ENCODE measurements at regions of chr9 and their contacts with region 1.

Region 1: GRCh38 chr9:108761655-108762347 is 94.0 kb downstream of the ACTL7B start:
- DNase-seq: peak; percentile 29 to 58
- ATAC-seq: peak in 7 of 8 donors; percentile 47 to 84 (median 80)
- H3K4me3 ChIP-seq: no peak overlapping the region
- H3K27ac ChIP-seq: no peak overlapping the region
- H3K4me1 ChIP-seq: peaks cover 0 to 6% (median 3%) of the 10 kb centered on the region in 9 donors
- H3K27me3 ChIP-seq: peaks cover 0 to 3% (median 0%) of the 10 kb centered on the region in 7 donors
- CTCF ChIP-seq: peak; percentile 78 to 93 (median 89)

Region 2: GRCh38 chr9:107425101-107426045 is 1336.4 kb before region 1 on chr9:
- intact Hi-C with region 1: loop called in 2 of 10 experiments (anchors 5 to 10 kb)
- DNase-seq: peak; percentile 76 to 78
- ATAC-seq: peak; percentile 82 to 92 (median 90)
- H3K4me3 ChIP-seq: peak overlapping the region in 8 of 10 donors; percentile 13 to 49 (median 36)
- H3K27ac ChIP-seq: peak overlapping the region in 7 of 10 donors; percentile 1 to 67 (median 42)
- H3K4me1 ChIP-seq: peaks cover 0 to 28% (median 9%) of the 10 kb centered on the region in 9 donors
- H3K27me3 ChIP-seq: no peaks in the 10 kb centered on the region
- CTCF ChIP-seq: peak; percentile 91 to 99 (median 96)

Region 3: GRCh38 chr9:107465467-107466451 is 1296.0 kb before region 1 on chr9:
- intact Hi-C with region 1: loop called in 6 of 10 experiments (anchors 5 to 10 kb)
- DNase-seq: peak; percentile 55 to 80
- ATAC-seq: peak; percentile 97 to 99 (median 98)
- H3K4me3 ChIP-seq: peak overlapping the region; percentile 30 to 76 (median 64)
- H3K27ac ChIP-seq: peak overlapping the region in 6 of 10 donors; percentile 28 to 66 (median 53)
- H3K4me1 ChIP-seq: peaks cover 0 to 14% (median 6%) of the 10 kb centered on the region in 9 donors
- H3K27me3 ChIP-seq: peaks cover 0 to 20% (median 0%) of the 10 kb centered on the region in 7 donors
- CTCF ChIP-seq: peak; percentile 82 to 97 (median 94)

Region 4: DNA sequence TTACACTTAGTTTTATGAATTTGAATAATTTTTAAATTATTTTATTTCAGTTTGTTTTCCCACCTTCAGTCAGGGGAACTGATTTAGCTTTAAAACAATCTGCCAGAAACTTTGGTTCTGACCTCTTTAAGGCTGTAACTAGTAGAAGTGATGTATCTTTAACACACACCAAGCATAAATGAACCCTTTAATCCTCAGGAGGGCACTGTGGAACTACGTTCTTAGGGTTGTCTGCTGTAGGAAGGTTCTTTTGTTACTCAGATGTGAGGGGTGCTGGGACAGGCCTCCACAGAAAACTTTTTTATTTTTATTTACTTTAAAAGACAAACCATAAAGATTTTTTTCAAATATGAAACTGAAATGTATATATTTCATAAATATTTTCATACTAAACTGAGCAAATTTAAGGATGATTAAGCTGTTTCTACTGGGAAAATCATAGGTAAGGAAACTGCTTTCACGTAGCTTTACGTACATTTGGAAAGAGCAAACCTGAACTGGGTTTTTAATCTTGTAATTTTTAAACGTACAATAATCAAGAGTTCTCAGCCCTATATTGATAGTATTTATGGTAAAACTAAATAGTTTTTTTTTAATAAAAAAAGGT is 1277.6 kb before region 1 on chr9:
- intact Hi-C with region 1: loop called in 4 of 10 experiments (anchors 5 to 10 kb)
- DNase-seq: peak in 1 of 2 donors; percentile 55
- ATAC-seq: peak; percentile 22 to 65 (median 52)
- H3K4me3 ChIP-seq: peak overlapping the region in 8 of 10 donors; percentile 60 to 94 (median 80)
- H3K27ac ChIP-seq: peak overlapping the region in 5 of 10 donors; percentile 3 to 98 (median 98)
- H3K4me1 ChIP-seq: peaks cover 0 to 61% (median 6%) of the 10 kb centered on the region in 9 donors
- H3K27me3 ChIP-seq: peaks cover 0 to 27% (median 0%) of the 10 kb centered on the region in 7 donors
- CTCF ChIP-seq: peak; percentile 27 to 78 (median 62)

Measured in heart right ventricle (tissue), 16 donors.